GM12878 (cell line): ENCODE measurements at regions of chr17 and their contacts with region 1.

Region 1: GRCh38 chr17:794876-795275 is 12.7 kb downstream of the MRM3 start:
- DNase-seq: no peak
- ATAC-seq: peak; percentile 85
- H3K4me3 ChIP-seq: no peak overlapping the region
- H3K27ac ChIP-seq: no peak overlapping the region
- H3K4me1 ChIP-seq: no peaks in the 10 kb centered on the region
- H3K27me3 ChIP-seq: no peaks in the 10 kb centered on the region
- CTCF ChIP-seq: peak; percentile 61 to 71 (median 68)
- EP300 ChIP-seq: no peak
- POLR2A ChIP-seq: no peak
- RAD21 ChIP-seq: peak; percentile 81

Region 2: DNA sequence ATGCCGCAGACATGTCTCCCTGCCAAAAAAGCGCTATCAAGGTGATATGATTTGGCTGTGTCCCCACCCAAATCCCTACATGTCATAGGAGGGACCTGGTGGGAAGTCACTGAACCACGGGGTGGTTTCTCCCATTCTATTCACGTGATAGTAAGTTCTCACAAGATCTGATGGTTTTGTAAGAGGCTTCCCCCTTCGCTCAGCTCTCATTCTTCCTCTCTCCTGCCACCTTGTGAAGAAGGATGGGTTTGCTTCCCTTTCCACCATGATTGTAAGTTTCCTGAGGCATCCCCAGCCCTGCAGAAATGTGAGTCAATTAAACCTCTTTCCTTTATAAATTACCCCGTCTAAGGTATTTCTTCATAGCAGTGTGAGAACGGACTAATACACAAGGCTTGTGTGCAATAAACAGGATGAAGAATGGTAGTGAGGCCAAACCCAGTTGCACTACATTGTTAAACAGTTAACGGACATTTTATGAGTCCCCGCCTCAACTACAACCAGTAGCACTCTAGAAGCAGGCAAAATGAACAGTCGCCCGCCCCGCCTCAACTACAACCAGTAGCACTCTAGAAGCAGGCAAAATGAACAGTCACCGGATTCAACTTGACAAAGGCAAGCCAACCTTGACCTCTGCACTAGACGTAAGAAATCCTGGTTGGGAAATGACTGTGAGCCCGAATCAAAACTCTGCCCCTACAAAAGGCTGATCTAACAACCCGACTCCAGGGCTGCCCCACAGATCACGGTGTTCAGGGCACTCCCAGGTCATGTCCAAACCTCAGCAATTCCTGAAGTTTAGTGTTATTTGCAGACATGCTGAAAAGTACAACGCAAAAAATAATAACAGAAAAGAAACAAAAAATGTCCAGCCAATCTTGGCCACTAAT is 106.5 kb before region 1 on chr17:
- CTCF ChIA-PET with region 1: no interaction called
- POLR2A ChIA-PET with region 1: no interaction called
- RAD21 ChIA-PET with region 1: no interaction called
- SMC1A ChIA-PET with region 1: no interaction called
- in situ Hi-C with region 1: no loop called
- intact Hi-C with region 1: no loop called
- DNase-seq: no peak
- ATAC-seq: no peak
- H3K4me3 ChIP-seq: no peak overlapping the region
- H3K27ac ChIP-seq: no peak overlapping the region
- H3K4me1 ChIP-seq: no peaks in the 10 kb centered on the region
- H3K27me3 ChIP-seq: no peaks in the 10 kb centered on the region
- CTCF ChIP-seq: no peak
- EP300 ChIP-seq: no peak
- POLR2A ChIP-seq: no peak
- RAD21 ChIP-seq: no peak

Region 3: DNA sequence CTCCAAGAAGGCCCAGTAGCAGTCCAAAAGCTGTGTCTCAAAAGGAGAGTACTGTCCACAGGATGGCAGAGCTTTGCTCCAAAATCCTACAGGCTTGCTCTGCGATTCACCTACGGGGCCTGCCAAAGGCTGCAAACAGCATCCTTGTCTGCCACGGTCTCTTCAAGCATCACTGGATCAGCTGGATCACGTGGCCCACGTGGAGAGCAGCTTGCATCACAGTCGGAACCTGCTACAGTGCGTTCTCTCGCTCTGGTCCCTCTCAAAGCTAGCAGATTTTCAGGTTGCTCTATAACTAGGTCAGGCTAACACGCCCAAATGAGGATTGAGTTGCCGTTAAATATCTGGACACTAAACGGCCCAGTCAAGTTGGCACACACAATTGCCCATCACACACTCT is 193.7 kb after region 1 on chr17:
- CTCF ChIA-PET with region 1: no interaction called
- POLR2A ChIA-PET with region 1: no interaction called
- RAD21 ChIA-PET with region 1: no interaction called
- SMC1A ChIA-PET with region 1: no interaction called
- in situ Hi-C with region 1: loop called (anchors 5 kb)
- intact Hi-C with region 1: no loop called
- DNase-seq: no peak
- ATAC-seq: no peak
- H3K4me3 ChIP-seq: no peak overlapping the region
- H3K27ac ChIP-seq: no peak overlapping the region
- H3K4me1 ChIP-seq: no peaks in the 10 kb centered on the region
- H3K27me3 ChIP-seq: no peaks in the 10 kb centered on the region
- CTCF ChIP-seq: no peak
- EP300 ChIP-seq: no peak
- POLR2A ChIP-seq: no peak
- RAD21 ChIP-seq: no peak